Activated CD4-positive, alpha-beta memory T cell treated with anti-CD3 and anti-CD28 coated beads for 36 hours (primary cell): ENCODE measurements at regions of chr2 and their contacts with region 1.

Region 1: DNA sequence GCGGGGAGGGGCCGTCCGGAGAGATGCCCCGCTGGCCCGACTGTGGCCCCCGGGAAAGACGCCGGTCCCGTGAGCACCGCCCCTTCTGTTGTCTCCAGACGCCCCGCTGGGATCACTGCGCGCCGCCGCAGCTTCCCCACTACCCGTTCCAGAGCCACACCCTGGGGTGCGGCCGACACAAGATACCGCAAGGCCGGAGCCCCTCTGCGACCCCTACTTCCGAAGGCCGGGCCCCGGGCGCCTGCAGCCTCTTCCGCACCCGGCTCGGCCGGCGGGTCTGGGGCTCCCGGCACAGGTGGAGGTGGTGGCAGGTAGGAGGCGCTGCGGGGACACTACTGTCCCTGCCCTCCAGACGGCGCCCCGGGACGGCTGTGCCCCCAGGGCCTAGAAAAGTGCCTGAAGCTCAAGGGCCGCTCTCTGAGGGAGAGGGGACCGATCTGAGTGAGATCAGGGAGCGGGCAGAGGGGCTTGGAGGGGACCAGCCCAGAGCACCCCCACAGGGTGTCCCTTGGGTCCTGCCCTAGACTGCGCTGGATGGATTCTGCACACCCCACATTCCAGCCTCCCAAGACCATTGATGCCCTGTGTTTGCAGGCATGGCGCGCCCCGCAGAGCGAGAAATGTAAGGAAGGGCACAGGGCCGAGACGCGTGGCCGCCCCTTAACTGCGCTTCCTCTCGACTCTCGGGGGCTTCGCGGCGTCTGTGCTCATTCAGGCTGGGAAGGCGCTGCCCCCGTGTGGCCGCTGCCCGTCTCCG is 80.0 kb downstream of the GFPT1 start:
- DNase-seq: peak; percentile 77
- H3K4me3 Mint-ChIP-seq: peak overlapping the region; percentile 66
- H3K27ac Mint-ChIP-seq: no peak overlapping the region
- H3K4me1 Mint-ChIP-seq: peaks cover 19% of the 10 kb centered on the region
- H3K27me3 Mint-ChIP-seq: peaks cover 31% of the 10 kb centered on the region

Region 2: GRCh38 chr2:68943581-68944568 is 363.1 kb before region 1 on chr2:
- CTCF ChIA-PET with region 1: interaction called, 22 read pairs
- POLR2A ChIA-PET with region 1: no interaction called
- intact Hi-C with region 1: loop called (anchors 1 kb)
- DNase-seq: peak; percentile 58
- H3K4me3 Mint-ChIP-seq: no peak overlapping the region
- H3K27ac Mint-ChIP-seq: no peak overlapping the region
- H3K4me1 Mint-ChIP-seq: peaks cover 8% of the 10 kb centered on the region
- H3K27me3 Mint-ChIP-seq: peaks cover 32% of the 10 kb centered on the region

Region 3: DNA sequence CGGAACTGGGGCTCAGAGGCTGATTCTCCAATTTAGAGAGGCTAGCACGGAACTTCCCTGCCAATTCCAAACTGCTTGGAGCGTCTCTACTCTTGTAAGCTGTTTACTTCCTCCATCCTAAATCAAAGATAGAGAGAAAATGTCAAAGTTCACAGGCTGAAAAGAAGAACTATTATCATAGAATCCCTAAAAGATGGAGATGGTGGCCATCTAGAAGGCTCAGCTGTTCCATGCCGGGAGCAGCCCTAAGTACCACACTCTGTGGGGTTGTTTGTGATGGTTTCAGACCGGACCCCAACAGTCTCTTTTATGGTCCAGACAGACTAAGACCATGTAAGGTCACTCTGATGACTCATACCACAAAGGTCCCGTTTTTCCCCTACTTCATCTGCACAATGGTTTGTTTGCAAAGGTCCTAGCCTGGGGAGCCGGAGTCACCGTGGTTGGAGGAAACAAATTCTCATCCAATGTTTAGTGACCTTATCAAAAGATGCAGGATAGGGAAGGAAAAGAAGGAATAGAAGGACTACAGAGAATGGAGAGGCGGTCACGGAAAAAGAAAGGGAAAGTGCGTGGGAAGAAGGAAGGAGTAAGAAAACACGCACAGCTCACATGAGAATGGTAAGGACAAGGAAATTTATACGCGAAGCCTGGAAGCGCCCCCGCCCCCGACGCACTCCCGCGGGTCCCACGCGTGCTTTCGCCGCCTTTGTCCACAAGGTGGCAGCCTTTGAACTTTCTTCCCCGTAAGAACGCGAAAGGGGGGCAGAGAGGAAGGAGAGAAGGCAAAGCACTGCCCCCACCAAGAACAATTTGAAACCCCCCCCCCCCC is 294.5 kb before region 1 on chr2:
- CTCF ChIA-PET with region 1: interaction called, 7 read pairs
- POLR2A ChIA-PET with region 1: no interaction called
- intact Hi-C with region 1: loop called (anchors 5 kb)
- DNase-seq: peak; percentile 44
- H3K4me3 Mint-ChIP-seq: peak overlapping the region; percentile 61
- H3K27ac Mint-ChIP-seq: no peak overlapping the region
- H3K4me1 Mint-ChIP-seq: peaks cover 14% of the 10 kb centered on the region
- H3K27me3 Mint-ChIP-seq: peaks cover 42% of the 10 kb centered on the region

Region 4: GRCh38 chr2:69026026-69026425 is 281.0 kb before region 1 on chr2:
- CTCF ChIA-PET with region 1: interaction called, 23 read pairs
- POLR2A ChIA-PET with region 1: no interaction called
- intact Hi-C with region 1: loop called (anchors 1 kb)
- DNase-seq: peak; percentile 38
- H3K4me3 Mint-ChIP-seq: no peak overlapping the region
- H3K27ac Mint-ChIP-seq: no peak overlapping the region
- H3K4me1 Mint-ChIP-seq: no peaks in the 10 kb centered on the region
- H3K27me3 Mint-ChIP-seq: peaks cover 28% of the 10 kb centered on the region

Region 5: GRCh38 chr2:69163109-69163508 is 143.9 kb before region 1 on chr2:
- CTCF ChIA-PET with region 1: no interaction called
- POLR2A ChIA-PET with region 1: no interaction called
- intact Hi-C with region 1: loop called (anchors 10 kb)
- DNase-seq: no peak
- H3K4me3 Mint-ChIP-seq: no peak overlapping the region
- H3K27ac Mint-ChIP-seq: no peak overlapping the region
- H3K4me1 Mint-ChIP-seq: no peaks in the 10 kb centered on the region
- H3K27me3 Mint-ChIP-seq: peaks cover 30% of the 10 kb centered on the region